Cardiac septum (tissue), 1 donor: ENCODE measurements at regions of chr1 and their contacts with region 1.

Region 1: DNA sequence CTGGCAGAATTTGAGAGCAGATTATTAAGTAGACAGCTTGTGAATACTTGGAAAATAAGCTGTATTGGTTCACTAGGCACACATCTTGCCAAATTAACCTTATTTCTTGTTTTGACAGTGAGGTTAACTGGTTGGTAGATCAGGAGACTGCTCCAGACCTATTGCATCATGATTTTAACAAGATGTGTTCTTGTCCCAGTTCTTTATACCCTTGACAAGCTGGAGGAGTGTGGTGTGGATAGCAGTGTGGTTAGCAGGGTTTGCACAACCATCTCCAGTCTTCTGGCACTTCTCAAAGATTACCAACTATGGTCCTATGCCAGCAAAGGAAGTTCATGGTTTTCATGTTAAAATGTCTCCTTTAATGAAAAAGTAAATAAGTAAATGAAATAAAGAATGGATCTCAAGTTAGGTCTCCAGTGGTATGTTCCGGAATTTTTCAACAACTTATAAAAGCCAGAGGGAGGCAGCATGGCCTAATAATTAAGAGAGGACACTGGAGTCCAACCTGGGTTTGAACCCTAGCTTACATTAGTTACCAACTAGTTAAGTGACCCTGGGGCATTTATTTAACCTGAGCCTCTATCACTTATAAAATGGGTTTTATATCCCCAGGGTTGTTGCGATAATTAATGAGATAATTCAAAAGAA is 34.1 kb downstream of the DDX20 start:
- DNase-seq: no peak

Region 2: DNA sequence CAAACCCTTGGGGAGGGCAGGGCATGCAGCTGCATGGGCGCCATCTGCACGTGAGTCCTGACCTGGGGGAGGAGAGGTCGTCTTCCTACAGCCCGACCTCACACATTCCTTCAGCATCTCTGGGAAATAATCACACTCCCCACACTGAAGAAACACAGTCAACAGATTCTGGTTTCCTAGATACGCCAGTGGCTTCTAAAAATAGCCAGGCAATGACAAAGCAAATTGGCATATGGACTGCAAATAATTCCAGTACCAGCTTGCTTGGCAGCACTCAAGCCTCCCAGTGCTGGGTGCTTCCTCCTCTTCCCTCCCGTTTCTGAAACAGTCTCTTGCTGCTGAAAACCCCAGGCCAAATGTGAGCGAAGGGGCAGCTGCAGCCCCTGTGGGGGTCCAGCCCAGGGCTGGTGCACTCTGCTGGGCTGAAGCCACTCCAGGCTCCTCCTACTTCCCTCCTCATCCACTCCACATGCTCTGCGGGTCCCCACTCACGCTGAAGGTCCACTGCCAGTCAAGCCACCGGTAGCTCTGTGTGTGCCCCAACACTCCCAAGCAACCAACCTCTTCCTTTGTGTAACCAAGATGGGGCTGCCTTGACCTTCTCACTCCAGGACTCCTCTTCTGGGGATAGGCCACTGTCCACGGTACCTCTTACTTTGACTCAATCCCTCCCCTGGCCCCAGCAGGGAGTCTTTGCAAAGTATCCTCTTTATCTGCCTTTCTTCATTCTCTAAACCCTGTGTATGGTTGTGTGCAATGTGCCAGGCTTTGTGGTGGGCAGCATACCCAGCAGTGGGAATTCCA is 130.6 kb after region 1 on chr1:
- intact Hi-C with region 1: no loop called
- DNase-seq: peak; percentile 75

Region 3: DNA sequence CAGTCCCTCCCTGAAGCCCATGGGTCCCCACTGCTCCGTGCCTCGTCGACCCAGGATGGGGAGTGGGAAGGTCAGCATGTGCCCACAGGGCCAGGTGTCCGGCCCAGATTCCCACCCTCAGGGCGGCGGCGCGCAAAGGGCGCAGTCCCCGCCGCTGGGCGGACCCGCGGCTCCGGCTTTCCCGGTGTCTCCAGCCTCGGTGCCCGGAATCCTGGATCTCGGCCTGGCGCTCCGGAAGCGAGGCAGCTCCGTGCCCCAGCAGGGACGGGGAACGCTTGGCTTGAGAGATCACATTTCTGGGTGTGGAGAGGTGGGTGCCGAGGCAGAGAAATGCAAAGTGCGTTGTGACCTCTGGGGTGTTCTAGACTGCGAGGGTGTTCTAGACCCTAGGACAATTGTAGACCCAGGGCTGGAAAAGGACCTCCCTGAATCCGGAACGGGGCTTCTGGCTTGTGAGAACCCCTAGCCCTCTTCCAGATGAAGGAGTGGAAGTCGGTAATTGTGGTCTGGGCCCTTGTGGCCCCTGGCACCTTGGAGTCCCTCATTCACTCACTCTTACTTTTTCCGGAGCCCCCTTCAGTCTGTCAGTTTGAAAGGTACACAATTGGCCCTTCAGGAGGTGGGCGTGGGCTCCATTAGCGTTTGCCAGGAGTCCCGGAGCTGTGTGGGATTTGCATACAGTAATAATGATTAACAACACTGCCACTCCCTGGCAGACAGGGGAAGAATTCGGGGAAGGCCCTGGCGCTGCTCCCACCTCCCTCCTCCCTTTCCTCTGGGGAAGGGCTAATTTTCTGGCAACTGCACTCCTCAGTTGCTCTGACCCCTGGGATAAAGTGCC is 201.3 kb after region 1 on chr1:
- intact Hi-C with region 1: no loop called
- DNase-seq: peak; percentile 84

Region 4: GRCh38 chr1:112337028-112337531 is 547.3 kb after region 1 on chr1:
- intact Hi-C with region 1: loop called (anchors 5 kb)
- DNase-seq: no peak